Activated naive CD4-positive, alpha-beta T cell treated with anti-CD3 and anti-CD28 coated beads for 36 hours (primary cell): ENCODE measurements at regions of chr12 and their contacts with region 1.

Region 1: GRCh38 chr12:30754709-30755394 is at the start of gene CAPRIN2:
- DNase-seq: peak; percentile 95
- H3K4me3 Mint-ChIP-seq: peak within 1 kb of the TSS; percentile 94
- H3K27ac Mint-ChIP-seq: peak within 1 kb of the TSS; percentile 51
- H3K4me1 Mint-ChIP-seq: peaks cover 38% of the 10 kb centered on the region
- H3K27me3 Mint-ChIP-seq: no peaks in the 10 kb centered on the region
- total RNA-seq, gene CAPRIN2: 10.3 to 11.3 TPM

Region 2: GRCh38 chr12:29380536-29381523 is 1374.0 kb before region 1 on chr12 and contains the start of gene ERGIC2:
- CTCF ChIA-PET with region 1: no interaction called
- intact Hi-C with region 1: loop called (anchors 1 kb)
- DNase-seq: peak; percentile 95
- H3K4me3 Mint-ChIP-seq: peak within 1 kb of the TSS; percentile 95
- H3K27ac Mint-ChIP-seq: peak within 1 kb of the TSS; percentile 96
- H3K4me1 Mint-ChIP-seq: peaks cover 47% of the 10 kb centered on the region
- H3K27me3 Mint-ChIP-seq: no peaks in the 10 kb centered on the region
- total RNA-seq, gene ERGIC2: 112 to 116 TPM

Region 3: DNA sequence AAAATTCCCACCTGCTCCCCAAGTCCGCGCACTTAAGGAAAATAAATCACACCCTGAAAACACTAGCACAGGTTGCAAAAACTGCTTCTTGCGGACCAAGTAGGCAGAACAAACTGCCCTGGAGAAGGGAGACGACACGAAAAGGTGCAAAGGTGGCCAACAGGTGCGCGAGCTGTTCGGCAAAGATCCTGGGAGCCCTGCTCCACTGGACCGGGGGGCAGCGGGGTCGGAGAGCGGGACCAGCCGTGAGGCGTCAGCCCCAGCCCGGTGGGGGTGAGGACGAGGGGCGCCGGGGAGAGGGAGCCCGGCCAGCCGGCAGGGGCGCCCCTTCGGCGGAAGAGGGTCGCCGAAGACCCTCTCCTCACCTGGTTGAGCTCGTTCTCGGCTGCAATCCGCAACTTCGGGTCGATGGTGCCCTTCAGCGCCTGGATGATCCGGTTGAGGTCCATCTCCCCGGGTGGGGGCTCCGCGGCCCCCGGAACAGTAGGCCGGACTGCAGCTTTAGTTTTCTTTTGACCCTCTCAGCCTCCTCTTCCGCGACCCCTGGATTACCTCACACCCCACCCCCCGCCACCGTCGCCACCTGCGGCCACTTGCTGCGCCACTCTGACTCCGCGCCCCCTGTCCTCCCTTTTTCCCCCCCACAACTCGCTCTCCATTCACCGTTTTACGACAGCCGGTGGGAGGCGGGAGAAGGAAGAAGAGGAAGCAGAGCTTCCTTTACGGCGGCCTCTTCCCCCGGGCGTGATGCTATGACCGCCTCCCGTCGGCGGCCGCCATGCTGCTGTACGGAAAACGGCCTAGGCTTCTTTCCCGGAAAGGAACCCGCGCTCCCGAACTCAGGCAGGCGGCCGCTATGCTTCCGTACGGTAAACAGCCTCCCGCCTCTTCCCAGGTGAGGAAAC is 59.4 kb before region 1 on chr12 and contains the start of gene IPO8:
- CTCF ChIA-PET with region 1: interaction called, 7 read pairs
- intact Hi-C with region 1: loop called (anchors 1 kb)
- DNase-seq: peak; percentile 89
- H3K4me3 Mint-ChIP-seq: peak within 1 kb of the TSS; percentile 93
- H3K27ac Mint-ChIP-seq: peak within 1 kb of the TSS; percentile 92
- H3K4me1 Mint-ChIP-seq: peaks cover 38% of the 10 kb centered on the region
- H3K27me3 Mint-ChIP-seq: peaks cover 2% of the 10 kb centered on the region
- total RNA-seq, gene IPO8: 36.0 to 41.5 TPM

Region 4: GRCh38 chr12:30795410-30796312 is 40.8 kb after region 1 on chr12:
- CTCF ChIA-PET with region 1: interaction called, 5 read pairs
- intact Hi-C with region 1: loop called (anchors 1 kb)
- DNase-seq: peak; percentile 73
- H3K4me3 Mint-ChIP-seq: peak overlapping the region; percentile 57
- H3K27ac Mint-ChIP-seq: no peak overlapping the region
- H3K4me1 Mint-ChIP-seq: peaks cover 14% of the 10 kb centered on the region
- H3K27me3 Mint-ChIP-seq: peaks cover 41% of the 10 kb centered on the region

Region 5: DNA sequence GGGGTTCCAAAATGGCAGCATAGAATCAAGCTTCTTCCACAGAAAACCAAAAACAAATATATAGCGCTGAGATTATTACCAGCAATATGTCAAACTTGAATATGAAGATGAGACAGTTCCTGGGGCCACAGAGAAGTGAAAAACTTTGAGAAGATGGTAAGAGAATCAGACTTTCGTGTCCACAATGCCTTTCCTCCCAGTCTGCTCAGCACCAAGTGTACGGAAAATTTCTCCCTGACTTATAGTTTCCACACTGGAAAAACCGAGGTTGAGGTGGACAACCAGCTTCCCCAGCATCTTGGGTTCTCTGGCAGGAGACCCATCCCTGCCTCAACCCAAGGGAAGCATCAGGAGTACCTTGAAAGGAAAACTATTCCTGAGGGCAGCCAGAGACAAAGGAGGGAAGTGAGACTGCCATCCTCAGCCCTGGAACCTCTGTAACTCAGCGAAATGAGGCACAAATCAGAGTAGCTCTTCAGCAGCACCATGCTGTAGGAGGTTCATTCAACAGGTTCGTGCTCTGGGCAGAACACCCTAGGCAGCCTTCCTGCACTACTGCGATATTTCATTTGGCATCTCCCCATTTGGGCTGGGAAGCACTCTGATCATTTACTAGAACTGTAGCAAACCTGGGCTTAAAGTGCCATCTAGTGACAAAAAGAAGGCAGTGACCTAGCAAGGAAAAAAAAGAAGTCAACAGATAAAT is 52.3 kb after region 1 on chr12:
- CTCF ChIA-PET with region 1: interaction called, 16 read pairs
- intact Hi-C with region 1: loop called (anchors 1 kb)
- DNase-seq: peak; percentile 12
- H3K4me3 Mint-ChIP-seq: no peak overlapping the region
- H3K27ac Mint-ChIP-seq: no peak overlapping the region
- H3K4me1 Mint-ChIP-seq: no peaks in the 10 kb centered on the region
- H3K27me3 Mint-ChIP-seq: peaks cover 14% of the 10 kb centered on the region

Region 6: DNA sequence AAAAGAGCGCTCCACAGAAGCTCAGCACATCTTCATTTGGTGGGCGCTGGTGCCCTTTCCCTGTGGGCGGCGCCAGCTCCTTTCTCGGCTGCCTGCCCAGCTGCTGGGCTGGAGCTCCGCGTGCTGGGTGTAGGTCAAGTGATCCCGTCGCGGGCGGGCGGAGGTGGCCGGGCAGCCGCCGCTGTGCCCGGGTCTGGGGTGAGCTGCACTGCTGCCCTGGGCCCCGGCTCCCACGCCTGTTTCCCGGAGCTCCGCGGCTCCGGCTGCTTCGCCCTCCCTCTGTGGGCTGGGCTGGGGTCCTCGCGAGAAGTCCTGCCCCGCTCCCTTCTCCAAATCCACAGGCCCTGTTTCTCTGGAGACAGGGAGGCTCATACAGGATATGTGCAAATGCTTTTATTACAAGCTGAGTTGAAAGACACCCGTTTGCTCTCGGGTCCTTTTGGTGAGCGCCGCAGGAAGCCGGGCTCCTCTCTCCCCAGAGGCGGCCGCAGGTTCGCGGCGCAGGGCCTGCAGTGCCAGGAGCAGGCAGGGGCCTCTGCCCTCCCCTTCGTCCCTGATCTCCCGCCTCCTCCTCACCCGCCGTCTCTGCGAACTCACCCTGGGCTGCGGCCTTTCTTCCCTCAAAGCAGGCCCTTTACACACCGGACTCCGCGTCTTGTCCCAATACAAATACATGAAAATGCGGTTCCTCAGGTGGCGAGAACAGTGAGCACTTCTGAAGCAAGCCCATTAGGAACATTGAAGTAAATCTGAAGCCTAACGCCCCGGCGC is 67.7 kb after region 1 on chr12:
- CTCF ChIA-PET with region 1: interaction called, 3 read pairs
- intact Hi-C with region 1: loop called (anchors 2 kb)
- DNase-seq: peak; percentile 24
- H3K4me3 Mint-ChIP-seq: peak overlapping the region; percentile 71
- H3K27ac Mint-ChIP-seq: no peak overlapping the region
- H3K4me1 Mint-ChIP-seq: peaks cover 11% of the 10 kb centered on the region
- H3K27me3 Mint-ChIP-seq: peaks cover 45% of the 10 kb centered on the region

Region 7: GRCh38 chr12:32679091-32679919 is 1924.5 kb after region 1 on chr12 and contains the start of gene DNM1L:
- CTCF ChIA-PET with region 1: no interaction called
- intact Hi-C with region 1: loop called (anchors 10 kb)
- DNase-seq: peak; percentile 94
- H3K4me3 Mint-ChIP-seq: peak within 1 kb of the TSS; percentile 81
- H3K27ac Mint-ChIP-seq: peak within 1 kb of the TSS; percentile 82
- H3K4me1 Mint-ChIP-seq: peaks cover 24% of the 10 kb centered on the region
- H3K27me3 Mint-ChIP-seq: no peaks in the 10 kb centered on the region
- total RNA-seq, gene DNM1L: 54.4 to 61.5 TPM